H1 (cell line): ENCODE measurements at regions of chr19 and their contacts with region 1.

Region 1: DNA sequence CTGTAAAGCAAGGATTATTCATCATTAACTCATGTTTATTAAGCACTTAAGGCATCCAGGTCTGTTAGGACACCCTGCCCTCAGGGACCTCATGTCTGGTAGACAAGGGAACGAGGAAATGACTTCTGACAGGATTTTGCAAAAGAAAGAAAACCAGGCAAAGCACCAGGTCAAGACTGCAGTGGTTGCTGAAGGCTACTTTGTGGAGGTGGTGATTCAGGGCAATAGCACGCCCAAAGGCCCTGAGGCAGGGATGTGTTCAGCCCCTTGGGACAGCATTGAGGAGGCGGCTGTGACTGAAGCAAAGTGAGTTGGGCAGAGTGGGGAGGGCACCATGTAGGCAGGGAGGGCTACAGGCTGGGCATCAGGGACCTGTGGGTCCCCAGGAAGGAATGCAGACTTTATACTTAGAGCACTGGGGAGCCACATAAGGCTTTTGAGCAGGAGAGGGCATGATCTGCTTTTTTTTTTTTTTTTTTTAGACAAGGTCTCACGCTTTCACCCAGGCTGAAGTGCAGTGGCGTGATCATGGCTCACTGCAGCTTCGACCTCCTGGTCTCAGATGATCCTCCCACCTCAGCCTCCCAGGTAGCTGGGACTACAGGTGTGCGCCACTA is 10.8 kb upstream of the HOMER3 start:
- DNase-seq: no peak
- H3K4me3 ChIP-seq: no peak overlapping the region
- H3K27ac ChIP-seq: no peak overlapping the region
- H3K4me1 ChIP-seq: no peaks in the 10 kb centered on the region
- H3K27me3 ChIP-seq: no peaks in the 10 kb centered on the region
- CTCF ChIP-seq: no peak
- EP300 ChIP-seq: no peak
- POLR2A ChIP-seq: no peak
- RAD21 ChIP-seq: no peak

Region 2: DNA sequence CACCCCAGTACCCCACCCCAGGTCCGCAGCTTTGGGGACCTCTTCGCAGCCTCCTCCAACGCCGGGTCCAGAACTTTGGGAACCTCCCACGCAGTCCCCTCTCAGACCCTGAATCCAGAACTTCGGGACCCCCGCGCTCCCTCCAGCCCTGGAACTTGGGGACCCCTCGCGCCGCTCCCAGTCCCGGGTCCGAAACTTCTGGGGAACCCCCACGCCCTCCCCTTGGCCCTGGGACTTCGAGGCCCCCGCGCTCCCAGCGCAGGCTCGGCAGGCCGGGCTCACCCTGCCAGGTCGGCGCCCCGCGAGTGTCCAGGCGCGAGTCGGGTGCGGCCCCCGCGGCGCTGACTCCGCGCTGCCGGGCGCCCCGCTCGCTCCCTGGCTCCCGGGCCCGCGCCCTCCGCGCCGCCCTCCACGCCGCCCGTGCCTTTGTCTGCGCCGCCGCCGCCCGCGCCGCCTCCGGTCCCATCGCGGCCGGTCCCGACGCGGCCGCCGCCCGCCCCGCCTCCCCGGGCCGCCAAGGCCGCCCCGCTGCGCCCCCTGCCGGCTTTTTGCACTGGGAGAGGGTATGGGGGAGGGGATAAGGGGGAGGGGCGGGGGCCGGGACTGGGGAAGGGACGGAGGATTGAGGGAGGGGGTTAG is 10.9 kb before region 1 on chr19 and contains the start of gene HOMER3:
- CTCF ChIA-PET with region 1: interaction called, 5 read pairs
- POLR2A ChIA-PET with region 1: interaction called, 10 read pairs
- DNase-seq: peak in 1 of 2 experiments; percentile 85
- H3K4me3 ChIP-seq: peak within 1 kb of the TSS; percentile 45 to 77 (median 66)
- H3K27ac ChIP-seq: no peak within 1 kb of the TSS; the same call in 1 of the 2 replicates
- H3K4me1 ChIP-seq: peaks cover 5 to 18% (median 9%) of the 10 kb centered on the region in 4 experiments
- H3K27me3 ChIP-seq: no peaks in the 10 kb centered on the region
- CTCF ChIP-seq: peak in 2 of 3 experiments; percentile 40 to 42; a peak in 3 of 4 replicates
- EP300 ChIP-seq: no peak
- POLR2A ChIP-seq: no peak
- RAD21 ChIP-seq: no peak; a peak in 1 of 4 replicates
- total RNA-seq, gene HOMER3: 28.3 and 33.2 TPM in 2 replicates

Region 3: DNA sequence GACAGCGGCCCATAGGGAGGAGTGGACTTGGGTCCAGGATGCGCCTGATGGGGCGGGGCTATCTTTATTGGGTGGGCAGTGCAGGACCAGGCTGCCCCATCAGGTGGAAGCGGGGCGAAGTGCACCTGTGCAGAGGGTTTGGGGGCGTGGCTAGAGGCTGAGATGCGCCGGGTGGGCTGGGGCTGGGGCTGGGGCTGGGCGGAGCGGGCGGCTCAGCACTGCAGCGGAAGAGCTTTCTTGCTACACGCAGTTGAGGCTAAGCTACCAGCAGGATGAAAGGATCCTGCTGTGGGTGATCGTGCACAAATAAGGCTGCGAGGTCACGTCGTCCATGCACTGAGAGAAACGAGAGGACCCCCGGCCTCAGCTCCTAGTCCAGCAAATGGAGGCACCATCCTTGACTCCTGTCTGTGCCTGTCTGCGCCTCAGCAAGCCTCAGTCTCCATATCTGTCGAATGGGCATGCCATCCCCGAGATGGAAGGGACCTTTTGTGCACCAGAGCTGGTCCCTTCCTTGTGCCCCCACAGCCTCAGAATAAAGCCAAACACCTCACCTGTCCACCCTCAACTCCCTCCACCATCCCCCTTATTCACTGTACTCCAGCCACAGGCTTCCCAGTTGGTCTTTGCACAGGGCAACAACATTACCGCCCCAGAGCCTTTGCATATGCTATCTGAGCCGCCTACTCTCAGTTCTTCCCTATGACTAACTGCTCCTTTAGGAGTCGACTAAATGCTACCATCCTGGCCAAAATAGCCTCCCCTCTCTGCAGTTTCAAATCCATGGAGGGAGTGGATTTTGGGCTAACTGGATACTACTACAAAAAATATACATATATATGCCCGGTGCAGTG is 10.2 kb after region 1 on chr19:
- CTCF ChIA-PET with region 1: interaction called, 3 read pairs
- POLR2A ChIA-PET with region 1: interaction called, 11 read pairs
- DNase-seq: peak; percentile 78 to 92
- H3K4me3 ChIP-seq: peak overlapping the region in 1 of 4 experiments; percentile 15; a peak in 3 of 8 replicates
- H3K27ac ChIP-seq: no peak overlapping the region
- H3K4me1 ChIP-seq: peaks cover 0 to 5% (median 2%) of the 10 kb centered on the region in 4 experiments; a peak in 3 of 7 replicates
- H3K27me3 ChIP-seq: no peaks in the 10 kb centered on the region
- CTCF ChIP-seq: peak; percentile 32 to 51 (median 47)
- EP300 ChIP-seq: no peak
- POLR2A ChIP-seq: peak in 1 of 2 experiments; percentile 43; a peak in 1 of 3 replicates
- RAD21 ChIP-seq: peak; percentile 33 to 45; a peak in 3 of 4 replicates